ENCODE measurements at regions of chr9 and their contacts with region 1.

Region 1: DNA sequence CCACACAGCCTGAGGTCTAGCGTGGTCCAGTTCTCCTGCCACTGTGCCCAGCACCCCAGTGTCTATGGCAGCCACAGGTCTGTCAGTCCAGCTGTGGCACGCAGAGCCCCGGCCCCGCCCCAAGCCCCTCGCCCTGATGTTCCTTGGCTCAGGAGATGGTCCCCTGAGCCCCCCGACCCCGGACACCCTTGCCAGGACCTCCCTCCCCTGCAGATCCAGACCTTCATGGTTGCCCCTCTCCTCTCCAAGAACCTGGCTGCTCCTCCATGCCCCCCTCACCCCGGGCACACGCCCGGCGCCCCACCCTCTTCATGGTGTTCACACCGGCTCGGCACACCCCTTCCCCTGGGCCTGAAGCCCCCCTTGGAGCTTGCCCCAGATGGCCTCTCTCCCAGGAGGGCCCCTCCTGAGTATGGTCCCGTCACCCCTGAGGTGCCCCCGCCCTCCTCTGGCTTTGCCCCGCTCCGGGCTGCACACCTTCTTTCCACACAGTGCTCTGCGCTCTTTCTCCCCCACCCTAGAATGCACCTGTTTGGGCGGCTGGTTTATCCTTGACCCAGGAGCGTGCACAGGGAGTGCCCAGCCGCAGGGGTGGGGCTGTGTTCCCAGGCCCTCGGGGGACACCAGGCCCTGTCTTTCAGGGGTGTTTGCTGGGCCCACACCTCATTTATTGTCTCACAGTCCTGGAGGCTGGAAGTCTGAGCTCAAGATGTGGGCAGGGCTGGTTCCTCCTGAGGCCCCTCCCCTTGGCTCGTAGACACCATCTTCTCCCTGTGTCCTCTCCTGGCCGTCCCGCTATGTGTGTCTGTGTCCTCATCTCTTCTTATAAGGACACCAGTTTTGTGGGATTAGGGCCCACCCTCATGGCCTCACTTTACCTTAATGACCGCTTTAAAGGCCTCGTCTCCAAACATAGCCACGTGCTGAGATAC is 37.6 kb downstream of the KCNT1 start:
- DNase-seq: no peak
- H3K4me3 ChIP-seq: no peak overlapping the region
- H3K27ac ChIP-seq: no peak overlapping the region
- H3K4me1 ChIP-seq: no peaks in the 10 kb centered on the region
- H3K27me3 ChIP-seq: no peaks in the 10 kb centered on the region
- CTCF ChIP-seq: no peak
- EP300 ChIP-seq: no peak
- POLR2A ChIP-seq: no peak

Region 2: DNA sequence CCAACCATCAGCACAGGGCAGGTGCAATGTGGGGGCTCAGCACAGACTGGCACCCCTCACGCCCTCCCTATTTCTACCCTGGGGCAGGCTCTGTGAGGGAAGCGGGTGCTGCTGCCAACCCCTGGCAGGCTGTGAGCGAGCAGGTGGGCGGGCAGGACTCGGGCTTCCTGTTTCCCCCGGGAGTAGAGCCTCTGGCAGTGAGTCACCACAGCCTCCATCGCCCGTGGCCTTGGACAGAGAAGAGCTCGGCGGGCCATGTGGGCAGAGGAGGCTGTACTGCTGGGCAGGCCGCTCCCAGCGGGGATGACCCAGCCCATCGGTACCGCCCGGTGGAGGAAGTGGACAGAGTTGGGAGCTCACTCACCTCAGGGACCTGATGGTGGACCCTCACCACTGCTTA is 20.9 kb before region 1 on chr9:
- intact Hi-C with region 1: loop called in 1 of 4 experiments (anchors 2 kb)
- DNase-seq: peak in 3 of 5 donors; percentile 42 to 71 (median 52)
- H3K4me3 ChIP-seq: no peak overlapping the region
- H3K27ac ChIP-seq: no peak overlapping the region
- H3K4me1 ChIP-seq: peaks cover 2% of the 10 kb centered on the region
- H3K27me3 ChIP-seq: no peaks in the 10 kb centered on the region
- CTCF ChIP-seq: no peak
- EP300 ChIP-seq: no peak
- POLR2A ChIP-seq: no peak